Right ventricle myocardium inferior (tissue), 1 donor: ENCODE measurements at regions of chr12 and their contacts with region 1.

Region 1: GRCh38 chr12:13211859-13212664 is 15.5 kb downstream of the EMP1 start:
- DNase-seq: no peak
- ATAC-seq: peak; percentile 29

Region 2: GRCh38 chr12:12813120-12814101 is 398.7 kb before region 1 on chr12 and contains the start of gene DDX47:
- intact Hi-C with region 1: loop called (anchors 10 kb)
- DNase-seq: peak; percentile 98
- ATAC-seq: peak; percentile 98
- total RNA-seq, gene DDX47: 26.5 TPM

Region 3: GRCh38 chr12:12837025-12837872 is 374.8 kb before region 1 on chr12:
- intact Hi-C with region 1: loop called (anchors 5 kb)
- DNase-seq: no peak
- ATAC-seq: peak; percentile 44

Region 4: GRCh38 chr12:12916135-12916944 is 295.7 kb before region 1 on chr12:
- intact Hi-C with region 1: loop called (anchors 1 kb)
- DNase-seq: peak; percentile 91
- ATAC-seq: peak; percentile 96